Activated B cell treated with CpG ODN at 0.5 μM for 24 hours (primary cell): ENCODE measurements at regions of chr12 and their contacts with region 1.

Region 1: GRCh38 chr12:55142669-55143565 is 16.7 kb downstream of the OR9K2 start:
- DNase-seq: no peak
- ATAC-seq: no peak
- H3K4me3 Mint-ChIP-seq: no peak overlapping the region
- H3K27ac Mint-ChIP-seq: no peak overlapping the region
- H3K4me1 Mint-ChIP-seq: peaks cover 5% of the 10 kb centered on the region
- H3K27me3 Mint-ChIP-seq: peaks cover 3% of the 10 kb centered on the region
- CTCF ChIP-seq: no peak

Region 2: DNA sequence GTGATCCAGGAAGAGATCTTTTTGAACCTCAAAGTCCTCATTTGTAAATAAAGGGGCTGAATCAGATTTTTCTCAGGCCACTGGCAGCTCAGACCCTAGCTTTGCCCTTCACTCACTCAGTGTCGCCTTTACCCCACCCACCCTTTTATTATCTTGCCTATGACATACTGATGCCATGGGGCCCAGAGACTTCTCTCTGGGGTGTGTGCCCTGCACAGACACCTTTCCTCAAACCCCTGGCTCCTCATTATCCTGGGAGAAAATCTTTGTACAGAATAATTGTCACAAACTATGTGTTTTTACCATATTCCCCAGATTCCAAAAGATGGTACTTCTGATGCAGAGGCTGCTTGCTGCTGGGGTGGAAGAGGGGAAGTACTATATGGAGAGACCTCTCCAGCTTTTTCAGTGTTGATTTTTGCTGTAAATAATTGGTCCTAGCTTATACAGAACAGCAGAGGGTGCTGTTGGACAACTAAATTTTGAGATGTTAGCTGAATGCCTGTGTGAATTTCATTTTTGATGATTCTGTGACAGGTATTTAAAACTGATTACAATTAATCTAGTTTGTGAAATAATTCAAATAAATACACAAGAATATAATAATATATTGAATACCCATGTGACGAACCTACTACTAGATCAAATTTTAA is 440.9 kb before region 1 on chr12:
- CTCF ChIA-PET with region 1: interaction called, 10 read pairs
- POLR2A ChIA-PET with region 1: no interaction called
- intact Hi-C with region 1: loop called (anchors 1 kb)
- DNase-seq: no peak
- ATAC-seq: no peak
- H3K4me3 Mint-ChIP-seq: no peak overlapping the region
- H3K27ac Mint-ChIP-seq: no peak overlapping the region
- H3K4me1 Mint-ChIP-seq: no peaks in the 10 kb centered on the region
- H3K27me3 Mint-ChIP-seq: peaks cover 8% of the 10 kb centered on the region
- CTCF ChIP-seq: no peak

Region 3: DNA sequence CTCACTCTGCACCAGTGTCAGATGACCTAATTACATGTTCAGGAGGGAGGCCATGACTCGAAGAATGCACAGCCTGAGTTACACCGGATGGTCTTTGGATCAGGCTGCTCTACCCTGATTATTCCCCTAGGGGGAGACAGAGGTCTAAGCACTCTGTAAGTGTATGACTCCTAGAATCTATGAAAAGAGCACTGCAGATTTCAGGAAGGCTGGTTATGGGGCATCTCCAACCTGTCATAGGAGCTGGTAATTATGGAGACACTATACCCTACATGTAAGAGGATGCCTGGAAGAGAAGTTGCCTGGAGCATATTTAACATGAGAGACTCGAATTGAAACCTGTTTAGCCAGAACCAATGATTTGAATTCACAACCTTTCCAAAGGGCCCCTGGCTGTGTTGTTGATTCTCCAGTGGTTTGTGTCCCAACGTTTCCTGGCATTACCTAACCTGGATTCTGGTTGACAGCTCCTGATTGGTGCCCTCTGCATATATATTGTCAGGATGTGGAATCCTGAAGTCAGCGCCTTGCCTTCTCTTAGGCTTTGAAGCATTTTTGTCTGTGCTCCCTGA is 288.8 kb before region 1 on chr12 and contains the start of gene MUCL1:
- CTCF ChIA-PET with region 1: no interaction called
- POLR2A ChIA-PET with region 1: no interaction called
- intact Hi-C with region 1: loop called (anchors 1 kb)
- DNase-seq: no peak
- ATAC-seq: peak; percentile 92
- H3K4me3 Mint-ChIP-seq: no peak within 1 kb of the TSS
- H3K27ac Mint-ChIP-seq: no peak within 1 kb of the TSS
- H3K4me1 Mint-ChIP-seq: no peaks in the 10 kb centered on the region
- H3K27me3 Mint-ChIP-seq: peaks cover 10% of the 10 kb centered on the region
- CTCF ChIP-seq: peak; percentile 77
- total RNA-seq, gene MUCL1: not detected in 2 replicates

Region 4: GRCh38 chr12:55226523-55226922 is 83.6 kb after region 1 on chr12:
- CTCF ChIA-PET with region 1: no interaction called
- POLR2A ChIA-PET with region 1: no interaction called
- intact Hi-C with region 1: no loop called
- DNase-seq: no peak
- ATAC-seq: no peak
- H3K4me3 Mint-ChIP-seq: no peak overlapping the region
- H3K27ac Mint-ChIP-seq: no peak overlapping the region
- H3K4me1 Mint-ChIP-seq: no peaks in the 10 kb centered on the region
- H3K27me3 Mint-ChIP-seq: peaks cover 19% of the 10 kb centered on the region
- CTCF ChIP-seq: no peak

Region 5: GRCh38 chr12:55467836-55468235 is 324.9 kb after region 1 on chr12:
- CTCF ChIA-PET with region 1: no interaction called
- POLR2A ChIA-PET with region 1: no interaction called
- intact Hi-C with region 1: no loop called
- DNase-seq: no peak
- ATAC-seq: peak; percentile 70
- H3K4me3 Mint-ChIP-seq: peak overlapping the region; percentile 61
- H3K27ac Mint-ChIP-seq: peak overlapping the region; percentile 46
- H3K4me1 Mint-ChIP-seq: peaks cover 45% of the 10 kb centered on the region
- H3K27me3 Mint-ChIP-seq: no peaks in the 10 kb centered on the region
- CTCF ChIP-seq: no peak